Mammary epithelial cell (primary cell): ENCODE measurements at regions of chr6 and their contacts with region 1.

Region 1: DNA sequence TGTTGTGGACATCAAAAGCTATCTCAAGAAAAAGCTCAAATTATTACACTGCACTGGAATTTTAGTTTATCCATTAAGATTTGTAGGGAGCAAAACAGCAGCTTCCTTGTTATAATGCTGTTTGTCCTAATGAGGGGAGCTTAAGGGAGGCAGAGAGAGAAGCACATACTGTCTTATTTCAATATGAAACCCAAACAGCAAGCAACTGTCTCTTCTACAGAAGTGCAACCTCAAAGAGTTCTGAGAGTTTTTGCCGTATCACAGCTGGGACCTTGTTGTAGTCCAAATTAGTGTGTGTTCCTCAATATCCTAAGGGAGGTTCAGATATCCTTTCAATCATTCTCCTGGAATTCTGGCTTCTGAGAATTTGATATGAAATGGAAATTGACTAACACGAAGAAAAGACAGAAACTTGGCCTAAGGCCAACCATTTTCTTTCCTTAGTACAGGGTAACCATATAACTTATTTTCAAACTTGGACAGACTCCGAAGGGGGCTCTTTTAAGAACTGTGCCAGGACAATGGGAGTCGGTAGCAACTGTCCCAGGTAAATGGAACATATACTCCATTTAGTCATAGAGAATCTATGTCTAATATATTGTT is 149.3 kb upstream of the CCN2 start:
- DNase-seq: no peak
- H3K4me3 ChIP-seq: no peak overlapping the region
- H3K27ac ChIP-seq: no peak overlapping the region
- H3K4me1 ChIP-seq: no peaks in the 10 kb centered on the region
- H3K27me3 ChIP-seq: no peaks in the 10 kb centered on the region
- CTCF ChIP-seq: no peak

Region 2: DNA sequence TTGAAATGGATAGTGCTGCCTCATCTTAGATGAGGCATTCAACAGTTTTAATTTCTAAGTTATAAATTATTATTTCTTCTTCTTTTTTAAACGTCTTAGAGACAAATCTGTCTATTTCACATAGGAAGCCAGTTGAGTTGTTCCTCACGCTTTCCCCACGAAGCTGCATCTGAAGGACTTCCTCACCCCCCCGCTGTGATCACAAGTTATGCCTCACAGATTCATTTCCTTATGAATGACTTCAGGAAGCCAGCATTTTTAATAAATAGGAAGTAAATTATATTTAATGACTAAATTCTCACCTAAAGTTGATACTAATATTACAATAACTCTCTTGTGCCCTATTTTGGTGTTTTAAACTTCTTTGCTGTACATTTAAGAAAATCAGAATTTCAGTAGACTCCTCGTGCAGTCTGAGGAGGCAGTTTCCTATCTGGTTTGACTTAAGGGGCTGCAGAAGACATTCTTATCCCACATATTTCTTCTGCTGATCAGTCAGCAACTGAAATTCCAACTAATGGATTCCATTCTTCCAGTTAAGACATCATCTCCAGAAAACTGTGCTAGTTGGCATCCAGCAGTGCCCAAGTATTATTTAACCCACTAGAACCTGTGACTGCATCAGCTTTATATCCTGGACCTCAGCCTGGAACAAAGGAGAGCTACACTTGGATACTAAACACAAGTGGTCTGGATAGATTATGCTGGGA is 33.4 kb after region 1 on chr6:
- CTCF ChIA-PET with region 1: interaction called, 12 read pairs
- dilution Hi-C with region 1: no loop called
- in situ Hi-C with region 1: no loop called
- intact Hi-C with region 1: no loop called
- DNase-seq: no peak
- H3K4me3 ChIP-seq: no peak overlapping the region
- H3K27ac ChIP-seq: no peak overlapping the region
- H3K4me1 ChIP-seq: peaks cover 20% of the 10 kb centered on the region
- H3K27me3 ChIP-seq: no peaks in the 10 kb centered on the region
- CTCF ChIP-seq: no peak